ENCODE measurements at regions of chr22 and their contacts with region 1.

Region 1: GRCh38 chr22:24525416-24526037 is 29.4 kb downstream of the GUCD1 start:
- DNase-seq: peak; percentile 92
- ATAC-seq: peak; percentile 88
- H3K4me3 ChIP-seq: no peak overlapping the region
- H3K27ac ChIP-seq: no peak overlapping the region
- H3K4me1 ChIP-seq: peaks cover 54% of the 10 kb centered on the region
- H3K27me3 ChIP-seq: no peaks in the 10 kb centered on the region
- CTCF ChIP-seq: peak; percentile 99
- EP300 ChIP-seq: peak in 1 of 2 experiments; percentile 64; a peak in 1 of 4 replicates
- POLR2A ChIP-seq: no peak
- RAD21 ChIP-seq: peak; percentile 96

Region 2: GRCh38 chr22:24325105-24325757 is 200.3 kb before region 1 on chr22:
- CTCF ChIA-PET with region 1: interaction called, 6 read pairs
- POLR2A ChIA-PET with region 1: no interaction called
- in situ Hi-C with region 1: no loop called
- intact Hi-C with region 1: loop called (anchors 2 kb)
- DNase-seq: peak; percentile 49
- ATAC-seq: no peak
- H3K4me3 ChIP-seq: no peak overlapping the region
- H3K27ac ChIP-seq: no peak overlapping the region
- H3K4me1 ChIP-seq: peaks cover 26% of the 10 kb centered on the region
- H3K27me3 ChIP-seq: no peaks in the 10 kb centered on the region
- CTCF ChIP-seq: peak; percentile 68
- EP300 ChIP-seq: no peak
- POLR2A ChIP-seq: no peak
- RAD21 ChIP-seq: no peak

Region 3: DNA sequence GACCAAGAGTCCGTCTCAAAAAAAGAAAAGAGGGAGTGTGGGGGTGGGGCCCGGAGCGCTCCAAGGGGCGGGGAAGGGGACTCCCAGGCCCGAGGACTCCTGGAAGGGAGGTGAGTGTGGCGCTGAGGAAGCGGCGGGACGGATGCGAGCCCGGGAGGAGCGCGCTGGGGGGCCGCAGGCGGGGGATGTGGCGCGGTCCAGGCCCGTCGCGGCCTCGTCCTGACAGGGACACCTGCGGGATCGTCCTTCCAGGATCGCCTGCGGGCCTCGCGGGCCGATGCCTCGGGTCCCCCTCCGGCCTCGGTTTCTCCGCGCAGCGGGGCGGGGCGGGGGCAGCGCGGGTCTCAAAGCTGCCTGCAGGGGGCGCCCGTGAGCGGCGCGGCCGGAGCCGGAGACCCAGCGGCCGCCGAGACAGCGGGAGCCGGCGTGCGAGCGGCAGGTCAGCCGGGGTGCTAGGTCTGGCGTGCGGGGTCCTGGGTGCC is 102.0 kb before region 1 on chr22:
- CTCF ChIA-PET with region 1: interaction called, 59 read pairs
- POLR2A ChIA-PET with region 1: interaction called, 24 read pairs
- in situ Hi-C with region 1: loop called (anchors 5 kb)
- intact Hi-C with region 1: loop called (anchors 1 kb)
- DNase-seq: no peak
- ATAC-seq: peak; percentile 28
- H3K4me3 ChIP-seq: peak overlapping the region; percentile 68 to 79 (median 71); a peak in 4 of 6 replicates
- H3K27ac ChIP-seq: no peak overlapping the region
- H3K4me1 ChIP-seq: peaks cover 42% of the 10 kb centered on the region
- H3K27me3 ChIP-seq: peaks cover 0 to 4% of the 10 kb centered on the region in 2 experiments; a peak in 2 of 5 replicates
- CTCF ChIP-seq: peak; percentile 75
- EP300 ChIP-seq: no peak
- POLR2A ChIP-seq: no peak
- RAD21 ChIP-seq: peak; percentile 87